Tibial artery (tissue), 4 donors: ENCODE measurements at regions of chr7 and their contacts with region 1.

Region 1: DNA sequence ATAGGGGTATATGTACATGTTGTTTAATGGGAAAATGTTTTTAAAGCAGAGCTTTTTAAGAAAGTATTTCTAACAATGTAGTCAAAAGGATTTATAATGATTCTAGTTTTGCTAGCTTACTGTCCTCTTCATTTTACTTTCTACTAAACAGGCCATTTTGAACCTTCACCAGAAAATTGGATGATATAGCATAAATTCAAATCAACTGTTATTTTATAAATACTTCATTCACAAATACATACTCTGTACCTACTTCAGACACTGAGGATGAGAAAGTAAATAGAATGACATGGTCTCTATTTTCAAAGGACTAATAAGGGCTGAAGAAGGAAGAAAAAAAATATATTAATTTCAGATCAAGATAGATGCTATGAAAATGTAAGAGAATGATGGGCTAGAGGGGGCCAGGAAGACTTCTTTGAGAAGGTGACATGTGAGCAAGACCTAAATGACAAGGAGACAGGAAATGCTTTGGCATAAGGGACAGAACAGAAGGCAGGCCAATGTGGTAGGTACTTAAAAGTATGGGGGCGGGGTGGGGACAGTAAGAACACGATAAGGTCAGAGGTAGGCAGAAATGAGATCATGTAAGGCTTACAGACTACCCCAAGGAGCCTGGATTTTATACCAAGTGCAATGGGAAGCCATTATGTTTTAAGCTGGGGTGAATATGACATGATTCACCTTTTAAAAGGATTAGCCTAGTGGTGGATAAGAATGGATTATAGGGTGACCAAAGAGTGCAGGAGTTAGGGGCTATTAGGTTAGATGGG is 5.2 kb downstream of the NAMPT start:
- DNase-seq: no peak
- H3K4me3 ChIP-seq: no peak overlapping the region
- H3K27ac ChIP-seq: no peak overlapping the region
- H3K4me1 ChIP-seq: peaks cover 0 to 66% (median 16%) of the 10 kb centered on the region in 4 donors
- H3K27me3 ChIP-seq: no peaks in the 10 kb centered on the region
- CTCF ChIP-seq: no peak

Region 2: GRCh38 chr7:106216517-106216922 is 63.1 kb before region 1 on chr7:
- intact Hi-C with region 1: loop called (anchors 2 kb)
- DNase-seq: peak; percentile 73 to 77
- H3K4me3 ChIP-seq: peak overlapping the region in 1 of 2 donors; percentile 23
- H3K27ac ChIP-seq: peak overlapping the region; percentile 78
- H3K4me1 ChIP-seq: peaks cover 4 to 32% (median 11%) of the 10 kb centered on the region in 4 donors
- H3K27me3 ChIP-seq: no peaks in the 10 kb centered on the region
- CTCF ChIP-seq: no peak

Region 3: GRCh38 chr7:106618480-106618879 is 338.9 kb after region 1 on chr7:
- intact Hi-C with region 1: no loop called
- DNase-seq: no peak
- H3K4me3 ChIP-seq: no peak overlapping the region
- H3K27ac ChIP-seq: no peak overlapping the region
- H3K4me1 ChIP-seq: peaks cover 0 to 49% (median 13%) of the 10 kb centered on the region in 4 donors
- H3K27me3 ChIP-seq: no peaks in the 10 kb centered on the region
- CTCF ChIP-seq: no peak